Vagina (tissue), 2 donors: ENCODE measurements at regions of chr12 and their contacts with region 1.

Region 1: GRCh38 chr12:115267464-115267863 is 583.5 kb upstream of the TBX3 start:
- DNase-seq: no peak
- H3K4me3 ChIP-seq: no peak overlapping the region
- H3K27ac ChIP-seq: no peak overlapping the region
- H3K4me1 ChIP-seq: no peaks in the 10 kb centered on the region
- H3K27me3 ChIP-seq: no peaks in the 10 kb centered on the region
- CTCF ChIP-seq: no peak
- POLR2A ChIP-seq: no peak

Region 2: GRCh38 chr12:115230606-115231005 is 36.9 kb before region 1 on chr12:
- intact Hi-C with region 1: loop called (anchors 1 kb)
- DNase-seq: no peak
- H3K4me3 ChIP-seq: no peak overlapping the region
- H3K27ac ChIP-seq: no peak overlapping the region
- H3K4me1 ChIP-seq: no peaks in the 10 kb centered on the region
- H3K27me3 ChIP-seq: no peaks in the 10 kb centered on the region
- CTCF ChIP-seq: no peak
- POLR2A ChIP-seq: no peak

Region 3: DNA sequence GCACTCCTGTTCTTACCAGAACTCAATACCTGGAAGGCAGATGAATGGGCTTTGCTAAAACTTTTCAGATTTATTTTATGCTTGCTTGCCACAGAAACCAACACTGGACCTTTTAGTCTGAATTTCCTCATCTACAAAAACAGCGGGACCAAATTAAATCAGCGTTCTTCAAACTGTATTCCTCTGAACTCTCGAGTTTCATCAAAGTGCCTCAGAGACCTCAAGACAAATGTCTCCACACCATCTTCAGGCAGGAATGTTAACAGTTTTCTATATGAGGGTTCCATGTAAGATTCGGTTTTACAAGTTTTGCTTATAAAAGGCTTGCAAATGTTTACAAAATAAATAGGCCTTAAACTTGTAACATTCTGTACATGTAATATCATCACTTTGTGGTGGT is 935.5 kb after region 1 on chr12:
- intact Hi-C with region 1: no loop called
- DNase-seq: no peak
- H3K4me3 ChIP-seq: no peak overlapping the region
- H3K27ac ChIP-seq: no peak overlapping the region
- H3K4me1 ChIP-seq: peaks cover 53% of the 10 kb centered on the region
- H3K27me3 ChIP-seq: no peaks in the 10 kb centered on the region
- CTCF ChIP-seq: no peak
- POLR2A ChIP-seq: no peak